ENCODE measurements at regions of chr2 and their contacts with region 1.

Region 1: GRCh38 chr2:30089171-30089570 is 57.6 kb upstream of the YPEL5 start:
- DNase-seq: no peak
- ATAC-seq: no peak
- H3K4me3 ChIP-seq: no peak overlapping the region
- H3K27ac ChIP-seq: no peak overlapping the region
- H3K4me1 ChIP-seq: no peaks in the 10 kb centered on the region
- H3K27me3 ChIP-seq: no peaks in the 10 kb centered on the region; a peak in 1 of 4 replicates
- CTCF ChIP-seq: no peak
- EP300 ChIP-seq: no peak
- POLR2A ChIP-seq: no peak
- RAD21 ChIP-seq: no peak

Region 2: GRCh38 chr2:30060562-30060961 is 28.6 kb before region 1 on chr2:
- CTCF ChIA-PET with region 1: no interaction called
- POLR2A ChIA-PET with region 1: no interaction called
- RAD21 ChIA-PET with region 1: no interaction called
- SMC1A ChIA-PET with region 1: no interaction called
- in situ Hi-C with region 1: no loop called
- intact Hi-C with region 1: no loop called
- DNase-seq: no peak
- ATAC-seq: no peak
- H3K4me3 ChIP-seq: no peak overlapping the region
- H3K27ac ChIP-seq: no peak overlapping the region
- H3K4me1 ChIP-seq: no peaks in the 10 kb centered on the region
- H3K27me3 ChIP-seq: no peaks in the 10 kb centered on the region
- CTCF ChIP-seq: no peak
- EP300 ChIP-seq: no peak
- POLR2A ChIP-seq: no peak
- RAD21 ChIP-seq: no peak

Region 3: DNA sequence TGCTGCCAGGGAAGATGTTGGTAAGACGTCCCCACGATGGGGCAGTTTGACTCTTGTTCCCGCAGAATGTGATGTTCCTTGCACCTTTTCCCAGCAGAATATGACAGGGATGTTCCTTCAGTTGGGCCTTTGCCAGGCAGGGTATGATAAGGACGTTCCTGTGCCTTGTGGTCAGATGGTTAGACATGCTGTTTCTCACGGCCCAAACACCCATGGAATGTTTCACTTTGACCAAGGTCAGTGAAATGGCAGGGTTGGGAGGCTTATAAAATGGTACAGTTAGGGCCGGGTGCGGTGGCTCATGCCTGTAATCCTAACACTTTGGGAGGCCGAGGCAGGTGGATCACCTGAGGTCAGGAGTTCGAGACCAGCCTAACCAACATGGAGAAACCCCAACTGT is 17.4 kb after region 1 on chr2:
- CTCF ChIA-PET with region 1: interaction called, 17 read pairs
- POLR2A ChIA-PET with region 1: no interaction called
- RAD21 ChIA-PET with region 1: no interaction called
- SMC1A ChIA-PET with region 1: interaction called, 4 read pairs
- in situ Hi-C with region 1: no loop called
- intact Hi-C with region 1: no loop called
- DNase-seq: no peak
- ATAC-seq: no peak
- H3K4me3 ChIP-seq: no peak overlapping the region
- H3K27ac ChIP-seq: no peak overlapping the region
- H3K4me1 ChIP-seq: no peaks in the 10 kb centered on the region
- H3K27me3 ChIP-seq: peaks cover 0 to 4% of the 10 kb centered on the region in 2 experiments; a peak in 1 of 4 replicates
- CTCF ChIP-seq: no peak
- EP300 ChIP-seq: no peak
- POLR2A ChIP-seq: no peak
- RAD21 ChIP-seq: no peak

Region 4: GRCh38 chr2:30115141-30115980 is 26.2 kb after region 1 on chr2:
- CTCF ChIA-PET with region 1: interaction called, 85 read pairs
- POLR2A ChIA-PET with region 1: no interaction called
- RAD21 ChIA-PET with region 1: interaction called, 13 read pairs
- SMC1A ChIA-PET with region 1: interaction called, 17 read pairs
- in situ Hi-C with region 1: no loop called
- intact Hi-C with region 1: loop called (anchors 1 kb)
- DNase-seq: peak; percentile 20
- ATAC-seq: peak; percentile 89
- H3K4me3 ChIP-seq: no peak overlapping the region
- H3K27ac ChIP-seq: no peak overlapping the region
- H3K4me1 ChIP-seq: no peaks in the 10 kb centered on the region
- H3K27me3 ChIP-seq: no peaks in the 10 kb centered on the region; a peak in 2 of 4 replicates
- CTCF ChIP-seq: peak; percentile 87 to 95 (median 92)
- EP300 ChIP-seq: no peak
- POLR2A ChIP-seq: no peak
- RAD21 ChIP-seq: peak; percentile 79

Region 5: GRCh38 chr2:30146438-30147147 is 57.4 kb after region 1 on chr2 and contains the start of gene YPEL5:
- CTCF ChIA-PET with region 1: interaction called, 12 read pairs
- POLR2A ChIA-PET with region 1: interaction called, 4 read pairs
- RAD21 ChIA-PET with region 1: no interaction called
- SMC1A ChIA-PET with region 1: interaction called, 3 read pairs
- in situ Hi-C with region 1: no loop called
- intact Hi-C with region 1: no loop called
- DNase-seq: peak; percentile 97
- ATAC-seq: peak; percentile 96
- H3K4me3 ChIP-seq: peak within 1 kb of the TSS; percentile 78
- H3K27ac ChIP-seq: peak within 1 kb of the TSS; percentile 83
- H3K4me1 ChIP-seq: peaks cover 25% of the 10 kb centered on the region
- H3K27me3 ChIP-seq: no peaks in the 10 kb centered on the region
- CTCF ChIP-seq: no peak
- EP300 ChIP-seq: peak in 1 of 2 experiments; percentile 78; a peak in 1 of 4 replicates
- POLR2A ChIP-seq: peak; percentile 82
- RAD21 ChIP-seq: no peak
- polyA plus RNA-seq, gene YPEL5: 24.9 to 43.6 TPM

Measured in GM12878 (cell line).